ENCODE measurements at regions of chr12 and their contacts with region 1.

Region 1: DNA sequence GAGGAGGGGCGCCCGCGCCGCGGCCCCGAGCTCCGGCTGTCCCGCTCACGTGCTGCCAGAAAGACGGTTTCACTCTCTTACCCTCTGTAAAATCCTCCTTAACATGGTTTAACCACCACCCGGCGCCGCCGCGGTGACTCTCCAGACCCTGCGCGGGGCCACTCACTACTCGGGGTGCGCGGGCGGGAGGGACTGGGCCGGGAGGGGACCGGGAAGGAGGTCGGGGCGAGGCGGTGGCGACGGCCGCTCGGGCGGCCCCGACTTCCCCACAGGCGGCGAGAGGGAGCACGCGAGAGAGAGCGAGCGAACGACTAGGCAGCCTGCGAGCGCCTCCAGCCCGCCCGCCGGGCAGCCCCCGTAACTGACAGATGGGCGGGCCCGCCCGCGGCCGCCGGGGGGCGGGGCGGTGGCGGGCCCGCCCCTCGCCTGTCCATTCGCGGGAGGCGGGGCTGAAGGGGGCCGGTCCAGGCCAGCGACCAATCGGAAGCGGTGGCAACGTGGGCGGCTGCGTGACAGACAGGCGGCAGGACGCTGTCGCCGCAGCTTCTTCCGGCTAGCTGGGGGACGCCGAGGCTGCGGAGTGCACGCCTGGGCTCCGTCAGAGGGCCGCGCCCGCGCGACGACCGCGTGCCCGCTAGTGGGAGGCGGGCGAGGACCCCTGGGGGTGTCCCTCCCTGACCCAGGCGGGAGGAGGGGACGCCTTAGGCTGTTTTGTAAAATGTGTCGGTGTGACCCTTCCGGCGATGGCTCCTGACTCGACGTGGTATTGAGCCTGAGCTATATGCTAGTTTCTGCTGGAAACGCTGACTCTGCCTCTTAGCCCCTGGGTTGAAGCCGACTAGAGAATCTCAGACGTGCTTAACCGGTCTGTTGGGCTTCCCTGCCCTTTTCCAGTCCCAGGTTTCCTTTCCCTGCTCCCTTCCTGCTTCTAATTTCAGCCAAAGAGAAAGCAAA is at the start of gene EEA1:
- DNase-seq: peak; percentile 99
- ATAC-seq: peak; percentile 80
- H3K4me3 Mint-ChIP-seq: peak within 1 kb of the TSS; percentile 86
- H3K27ac Mint-ChIP-seq: peak within 1 kb of the TSS; percentile 96
- H3K4me1 Mint-ChIP-seq: peaks cover 34% of the 10 kb centered on the region
- H3K27me3 Mint-ChIP-seq: no peaks in the 10 kb centered on the region
- total RNA-seq, gene EEA1: 20.2 to 33.2 TPM

Region 2: DNA sequence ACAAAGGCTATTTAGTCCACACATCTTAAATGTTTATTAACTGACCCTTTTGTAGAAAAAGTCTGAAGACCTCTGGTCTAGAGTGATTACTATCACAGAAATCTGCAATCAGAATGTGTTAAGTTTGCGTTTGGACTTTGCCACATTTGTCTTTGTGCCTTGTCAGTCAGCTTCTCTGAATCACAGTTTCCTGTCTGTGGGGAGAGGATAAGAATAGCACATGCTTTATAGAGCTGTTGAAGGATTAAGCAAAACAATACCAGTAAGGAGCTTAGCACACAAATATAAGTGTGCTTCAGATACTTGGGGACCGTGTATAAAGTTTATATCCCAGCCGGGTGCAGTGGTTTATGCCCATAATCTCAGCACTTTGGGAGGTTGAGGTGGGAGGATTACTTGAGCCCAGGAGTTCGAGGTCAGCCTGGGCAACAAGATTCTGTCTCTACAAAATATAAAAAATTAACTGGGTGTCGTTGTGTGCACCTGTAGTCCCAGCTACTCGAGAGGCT is 720.6 kb before region 1 on chr12:
- CTCF ChIA-PET with region 1: no interaction called
- POLR2A ChIA-PET with region 1: no interaction called
- intact Hi-C with region 1: loop called in 1 of 2 experiments (anchors 10 kb)
- DNase-seq: peak; percentile 40
- ATAC-seq: peak; percentile 77
- H3K4me3 Mint-ChIP-seq: peak overlapping the region; percentile 67
- H3K27ac Mint-ChIP-seq: peak overlapping the region; percentile 81
- H3K4me1 Mint-ChIP-seq: peaks cover 32% of the 10 kb centered on the region
- H3K27me3 Mint-ChIP-seq: no peaks in the 10 kb centered on the region

Region 3: GRCh38 chr12:92827836-92828431 is 101.3 kb before region 1 on chr12:
- CTCF ChIA-PET with region 1: no interaction called
- POLR2A ChIA-PET with region 1: no interaction called
- intact Hi-C with region 1: loop called in 1 of 2 experiments (anchors 10 kb)
- DNase-seq: peak; percentile 61
- ATAC-seq: no peak
- H3K4me3 Mint-ChIP-seq: no peak overlapping the region
- H3K27ac Mint-ChIP-seq: no peak overlapping the region
- H3K4me1 Mint-ChIP-seq: peaks cover 2% of the 10 kb centered on the region
- H3K27me3 Mint-ChIP-seq: no peaks in the 10 kb centered on the region

Region 4: DNA sequence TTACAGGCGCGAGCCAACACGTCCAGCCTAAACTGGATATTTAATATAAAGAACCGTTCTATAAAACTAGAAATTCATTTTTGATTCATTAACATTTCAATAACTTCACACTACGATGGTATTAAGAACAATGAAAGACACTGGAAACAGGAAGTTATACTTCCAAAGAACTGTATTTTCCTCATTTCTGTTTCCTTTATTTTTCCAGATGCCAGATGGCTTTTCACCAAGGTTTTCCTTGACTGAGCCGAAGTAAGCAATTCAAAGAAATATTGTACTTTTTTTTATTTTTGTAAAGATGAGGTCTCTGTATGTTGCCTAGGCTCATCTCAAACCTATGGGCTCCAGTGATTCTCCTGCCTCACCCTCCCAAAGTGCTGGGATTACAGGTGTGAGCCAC is 28.3 kb before region 1 on chr12:
- CTCF ChIA-PET with region 1: no interaction called
- POLR2A ChIA-PET with region 1: no interaction called
- intact Hi-C with region 1: no loop called
- DNase-seq: no peak
- ATAC-seq: no peak
- H3K4me3 Mint-ChIP-seq: no peak overlapping the region
- H3K27ac Mint-ChIP-seq: no peak overlapping the region
- H3K4me1 Mint-ChIP-seq: peaks cover 39% of the 10 kb centered on the region
- H3K27me3 Mint-ChIP-seq: no peaks in the 10 kb centered on the region

Region 5: GRCh38 chr12:93378373-93379325 is 449.4 kb after region 1 on chr12:
- CTCF ChIA-PET with region 1: no interaction called
- POLR2A ChIA-PET with region 1: interaction called, 4 read pairs
- intact Hi-C with region 1: loop called (anchors 1 to 5 kb)
- DNase-seq: peak; percentile 76
- ATAC-seq: peak; percentile 66
- H3K4me3 Mint-ChIP-seq: peak overlapping the region; percentile 98
- H3K27ac Mint-ChIP-seq: peak overlapping the region; percentile 99
- H3K4me1 Mint-ChIP-seq: peaks cover 42% of the 10 kb centered on the region
- H3K27me3 Mint-ChIP-seq: no peaks in the 10 kb centered on the region

Region 6: DNA sequence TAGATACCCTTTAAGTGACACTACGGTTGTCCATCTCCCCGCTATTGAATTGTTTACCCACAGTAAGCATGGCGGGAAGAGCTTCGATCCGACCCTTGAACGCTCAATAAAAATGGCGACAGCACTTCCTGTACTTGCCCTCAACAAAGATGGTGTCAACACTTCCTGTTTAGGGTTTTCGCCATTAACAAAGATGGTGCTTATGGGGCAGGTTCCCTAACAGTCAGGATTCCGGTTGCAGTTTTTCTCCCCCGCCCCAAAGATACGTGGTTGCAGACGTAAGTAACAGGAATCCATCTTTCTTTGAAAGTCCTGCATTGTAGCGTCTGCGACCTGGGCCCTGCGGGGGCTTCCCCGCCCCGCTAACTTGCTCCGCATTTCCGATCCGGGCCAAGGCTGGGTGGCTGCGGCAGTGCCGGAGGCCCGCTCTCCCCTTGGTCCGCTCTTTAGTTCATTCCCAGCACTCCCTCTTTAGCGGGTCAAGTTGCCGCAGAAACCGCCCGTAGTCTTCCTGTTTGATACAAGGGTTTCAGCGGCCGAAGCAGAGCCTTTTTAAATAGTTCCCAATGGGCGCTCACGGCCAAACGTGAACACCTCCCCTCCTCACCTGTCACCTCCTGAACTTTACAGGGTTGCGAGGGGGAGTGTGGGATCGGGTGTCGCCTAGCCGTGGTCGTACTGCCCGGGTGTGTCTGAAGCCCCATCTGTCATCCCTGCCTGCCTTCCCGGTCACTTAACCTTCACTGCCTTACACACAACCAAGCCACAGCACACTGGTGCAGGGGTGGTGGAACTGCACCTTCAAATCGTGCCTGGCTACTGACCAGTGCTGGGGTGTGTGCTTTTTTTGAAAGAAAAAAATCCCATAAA is 748.2 kb after region 1 on chr12 and contains the start of gene CRADD:
- CTCF ChIA-PET with region 1: no interaction called
- POLR2A ChIA-PET with region 1: no interaction called
- intact Hi-C with region 1: loop called in 1 of 2 experiments (anchors 1 kb)
- DNase-seq: peak; percentile 90
- ATAC-seq: peak; percentile 97
- H3K4me3 Mint-ChIP-seq: peak within 1 kb of the TSS; percentile 97
- H3K27ac Mint-ChIP-seq: peak within 1 kb of the TSS; percentile 100
- H3K4me1 Mint-ChIP-seq: peaks cover 29% of the 10 kb centered on the region
- H3K27me3 Mint-ChIP-seq: peaks cover 8% of the 10 kb centered on the region
- total RNA-seq, gene CRADD: 5.7 to 7.8 TPM

Region 7: GRCh38 chr12:94459728-94460615 is 1530.7 kb after region 1 on chr12 and contains the start of gene CEP83:
- CTCF ChIA-PET with region 1: no interaction called
- POLR2A ChIA-PET with region 1: no interaction called
- intact Hi-C with region 1: loop called in 1 of 2 experiments (anchors 2 kb)
- DNase-seq: peak; percentile 98
- ATAC-seq: peak; percentile 99
- H3K4me3 Mint-ChIP-seq: peak within 1 kb of the TSS; percentile 96
- H3K27ac Mint-ChIP-seq: peak within 1 kb of the TSS; percentile 95
- H3K4me1 Mint-ChIP-seq: peaks cover 30% of the 10 kb centered on the region
- H3K27me3 Mint-ChIP-seq: peaks cover 10% of the 10 kb centered on the region
- total RNA-seq, gene CEP83: 21.9 to 22.6 TPM